GM10248 (cell line): ENCODE measurements at regions of chr9 and their contacts with region 1.

Region 1: DNA sequence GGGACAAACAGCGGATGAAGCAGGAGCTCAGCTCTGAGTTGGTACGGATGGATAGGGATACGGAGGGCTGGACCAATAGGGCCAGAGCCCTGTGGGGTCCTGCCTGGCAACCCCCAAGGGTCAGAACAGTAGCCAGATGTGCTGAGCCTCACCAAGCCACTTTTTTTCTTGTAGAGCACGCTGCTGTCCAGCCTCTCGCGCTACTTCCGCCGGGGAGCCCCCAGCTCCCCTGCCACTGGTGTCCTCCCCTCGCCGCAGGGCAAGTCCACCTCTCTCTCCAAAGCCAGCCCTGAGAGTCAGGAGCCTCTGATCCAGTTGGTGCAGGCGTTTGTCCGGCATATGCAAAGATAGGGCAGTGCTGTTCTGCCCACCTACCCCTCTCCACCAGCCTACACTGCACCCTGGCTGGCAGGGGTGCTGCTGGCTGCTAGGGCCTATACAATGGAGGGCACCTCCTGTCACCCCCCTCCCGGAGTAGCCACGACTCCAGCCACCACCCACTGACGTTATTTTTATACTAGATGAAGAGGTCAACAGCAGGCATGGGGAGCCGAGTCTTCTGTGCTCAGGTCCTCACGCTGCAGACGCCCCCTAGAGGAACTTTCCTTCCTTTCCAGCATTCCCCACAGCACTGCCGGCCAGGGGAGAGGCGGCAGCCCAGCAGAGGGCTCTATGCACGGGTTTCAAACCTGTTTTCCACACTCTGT is 21.6 kb downstream of the SH3GLB2 start:
- DNase-seq: peak; percentile 84
- CTCF ChIP-seq: peak; percentile 73

Region 2: DNA sequence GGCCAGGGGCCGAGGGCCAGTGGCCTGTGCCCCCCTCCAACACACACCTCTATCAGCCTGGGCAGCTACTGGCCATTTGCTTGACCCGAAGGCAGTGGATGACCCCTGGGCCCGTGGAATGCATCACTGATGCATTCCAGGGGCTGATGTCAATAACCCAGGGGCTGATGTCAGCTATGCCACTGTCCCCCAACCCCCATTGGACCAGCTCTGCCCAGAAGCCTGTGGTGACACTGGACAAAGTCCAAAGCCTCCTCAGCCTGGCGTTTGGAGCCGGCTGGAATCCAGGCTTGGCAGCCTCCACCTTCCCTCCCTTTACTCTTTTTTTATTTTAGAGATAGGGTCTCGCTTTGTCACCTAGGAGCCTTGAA is 130.7 kb before region 1 on chr9:
- CTCF ChIA-PET with region 1: no interaction called
- POLR2A ChIA-PET with region 1: interaction called, 14 read pairs
- DNase-seq: no peak
- CTCF ChIP-seq: no peak

Region 3: GRCh38 chr9:128995791-128996190 is 10.7 kb before region 1 on chr9:
- CTCF ChIA-PET with region 1: interaction called, 17 read pairs
- POLR2A ChIA-PET with region 1: no interaction called
- DNase-seq: no peak
- CTCF ChIP-seq: no peak

Region 4: GRCh38 chr9:129023036-129023907 is 16.8 kb after region 1 on chr9:
- CTCF ChIA-PET with region 1: interaction called, 22 read pairs
- POLR2A ChIA-PET with region 1: no interaction called
- DNase-seq: no peak
- CTCF ChIP-seq: no peak